Transverse colon (tissue), 4 donors: ENCODE measurements at regions of chr2 and their contacts with region 1.

Region 1: GRCh38 chr2:219160186-219161017 is at the start of gene NHEJ1:
- DNase-seq: peak; percentile 99
- H3K4me3 ChIP-seq: peak within 1 kb of the TSS; percentile 48 to 74 (median 58)
- H3K27ac ChIP-seq: peak within 1 kb of the TSS; percentile 93 to 98 (median 96)
- H3K4me1 ChIP-seq: peaks cover 4 to 14% (median 7%) of the 10 kb centered on the region in 4 donors
- H3K27me3 ChIP-seq: no peaks in the 10 kb centered on the region
- CTCF ChIP-seq: peak; percentile 98 to 100 (median 100)
- EP300 ChIP-seq: no peak
- POLR2A ChIP-seq: peak; percentile 63
- total RNA-seq, gene NHEJ1: 50.5 to 90.2 (median 65.3) TPM

Region 2: GRCh38 chr2:219099329-219099728 is 61.1 kb before region 1 on chr2:
- in situ Hi-C with region 1: no loop called
- intact Hi-C with region 1: no loop called
- DNase-seq: no peak
- H3K4me3 ChIP-seq: no peak overlapping the region
- H3K27ac ChIP-seq: no peak overlapping the region
- H3K4me1 ChIP-seq: peaks cover 0 to 12% (median 0%) of the 10 kb centered on the region in 4 donors
- H3K27me3 ChIP-seq: no peaks in the 10 kb centered on the region
- CTCF ChIP-seq: no peak
- EP300 ChIP-seq: no peak
- POLR2A ChIP-seq: no peak

Region 3: DNA sequence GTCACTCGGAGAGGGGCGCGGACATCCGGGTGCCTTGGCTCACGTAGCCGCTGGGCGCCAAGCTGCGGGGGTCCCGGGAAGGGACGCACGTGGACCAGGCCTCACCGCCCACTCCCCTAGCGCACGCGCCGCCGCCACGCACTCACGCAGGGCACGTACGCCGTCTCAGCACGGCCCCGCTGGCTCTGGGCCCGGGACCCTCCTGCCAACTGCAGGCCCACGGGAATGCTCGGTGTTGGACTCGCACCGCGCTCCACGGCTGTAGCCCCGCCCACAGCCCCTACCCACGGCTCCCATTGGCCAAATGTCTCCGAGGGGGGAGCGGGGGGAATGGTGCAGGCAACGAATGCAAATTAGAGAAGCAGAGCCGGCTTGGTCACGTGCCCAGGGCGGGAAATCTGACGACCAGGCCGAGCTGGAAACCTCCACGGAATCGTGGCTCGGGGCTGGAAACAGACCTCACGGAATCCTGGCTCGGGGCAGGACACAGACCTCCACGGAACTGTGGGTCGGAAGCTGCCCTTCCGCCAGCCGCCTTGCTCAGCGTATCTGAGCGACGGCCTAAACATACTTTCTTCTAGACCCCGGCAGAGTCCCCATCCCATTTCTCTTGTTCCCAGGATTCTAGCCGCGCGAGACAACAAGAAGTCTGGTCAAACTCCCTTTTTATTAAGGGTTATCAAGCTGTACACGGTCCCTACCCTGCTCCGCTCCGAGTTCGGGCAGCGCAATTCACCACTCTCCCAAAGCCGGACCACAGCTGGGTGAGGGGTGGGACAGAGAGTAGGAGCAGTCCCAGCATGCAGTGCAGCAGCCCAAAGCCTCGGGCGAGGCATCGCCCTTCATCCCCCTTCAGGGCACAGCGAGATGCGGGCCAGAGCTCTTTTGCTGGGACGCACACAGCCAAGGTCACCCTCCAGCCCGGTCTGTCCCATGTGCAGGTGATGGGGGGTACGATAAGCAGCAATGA is 58.6 kb after region 1 on chr2 and contains the start of gene ABCB6:
- in situ Hi-C with region 1: loop called in 1 of 4 experiments (anchors 10 kb)
- intact Hi-C with region 1: loop called (anchors 10 kb)
- DNase-seq: peak; percentile 96
- H3K4me3 ChIP-seq: peak within 1 kb of the TSS; percentile 36 to 59 (median 50)
- H3K27ac ChIP-seq: peak within 1 kb of the TSS; percentile 90 to 98 (median 95)
- H3K4me1 ChIP-seq: peaks cover 19 to 37% (median 30%) of the 10 kb centered on the region in 4 donors
- H3K27me3 ChIP-seq: no peaks in the 10 kb centered on the region
- CTCF ChIP-seq: no peak
- EP300 ChIP-seq: no peak
- POLR2A ChIP-seq: peak; percentile 60
- total RNA-seq, gene ABCB6: 3.4 to 28.7 (median 20.4) TPM

Region 4: GRCh38 chr2:219229305-219230058 is 69.1 kb after region 1 on chr2 and contains the starts of genes ANKZF1 and ATG9A:
- in situ Hi-C with region 1: no loop called
- intact Hi-C with region 1: loop called (anchors 10 kb)
- DNase-seq: peak; percentile 99
- H3K4me3 ChIP-seq: peak within 1 kb of the TSS; percentile 78 to 90 (median 81)
- H3K27ac ChIP-seq: peak within 1 kb of the TSS; percentile 92 to 98 (median 96)
- H3K4me1 ChIP-seq: peaks cover 18 to 36% (median 30%) of the 10 kb centered on the region in 4 donors
- H3K27me3 ChIP-seq: no peaks in the 10 kb centered on the region
- CTCF ChIP-seq: peak in 1 of 5 experiments; percentile 28
- EP300 ChIP-seq: no peak
- POLR2A ChIP-seq: peak; percentile 94
- total RNA-seq, gene ANKZF1: 64.3 to 318 (median 114) TPM
- total RNA-seq, gene ATG9A: 73.2 to 243 (median 82.7) TPM